ENCODE measurements at regions of chr2 and their contacts with region 1.

Region 1: DNA sequence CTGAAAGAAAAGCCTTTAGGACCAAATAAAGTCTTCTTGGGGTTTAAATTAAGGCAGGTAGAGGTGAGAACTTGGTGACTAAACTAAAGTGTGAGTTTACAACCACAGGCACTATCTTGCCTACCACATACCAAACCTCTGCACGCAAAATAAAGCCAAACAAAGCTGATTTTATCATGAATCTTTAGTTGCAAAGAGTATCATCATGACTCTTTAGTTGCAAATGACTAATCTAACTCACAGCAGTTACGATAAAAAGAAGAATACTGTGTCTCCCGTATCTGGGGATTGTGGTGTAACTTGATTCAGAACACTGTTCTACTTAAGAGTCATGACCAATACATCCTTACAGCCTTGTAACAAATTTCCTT is 11.2 kb downstream of the CFAP210 start:
- DNase-seq: peak; percentile 72
- ATAC-seq: peak; percentile 66
- H3K4me3 ChIP-seq: no peak overlapping the region
- H3K27ac ChIP-seq: peak overlapping the region; percentile 79
- H3K4me1 ChIP-seq: peaks cover 24% of the 10 kb centered on the region
- H3K27me3 ChIP-seq: no peaks in the 10 kb centered on the region
- CTCF ChIP-seq: no peak

Region 2: DNA sequence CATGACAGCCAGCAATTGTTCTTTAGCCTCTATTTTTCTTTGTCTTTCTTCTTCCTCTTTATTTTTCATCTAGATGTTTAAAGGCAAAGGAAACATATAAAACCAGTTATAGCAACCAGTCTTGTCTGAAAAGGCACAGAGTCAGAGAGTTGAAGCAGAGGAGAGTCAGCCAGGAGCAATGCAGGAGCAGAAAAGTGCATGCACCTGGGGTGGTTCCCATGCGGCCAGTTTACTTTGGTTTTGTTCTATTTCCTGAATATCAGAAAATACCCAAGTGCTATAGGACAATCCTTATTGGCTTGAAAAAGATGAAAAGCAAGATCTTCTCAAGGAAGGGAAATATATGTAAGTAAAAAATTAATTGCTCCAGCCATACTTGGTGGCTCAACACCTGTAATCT is 33.8 kb before region 1 on chr2:
- CTCF ChIA-PET with region 1: no interaction called
- POLR2A ChIA-PET with region 1: no interaction called
- intact Hi-C with region 1: loop called (anchors 5 kb)
- DNase-seq: no peak
- ATAC-seq: no peak
- H3K4me3 ChIP-seq: no peak overlapping the region
- H3K27ac ChIP-seq: no peak overlapping the region
- H3K4me1 ChIP-seq: no peaks in the 10 kb centered on the region
- H3K27me3 ChIP-seq: no peaks in the 10 kb centered on the region
- CTCF ChIP-seq: no peak

Measured in PC-3 (cell line).